ENCODE measurements at regions of chr2 and their contacts with region 1.

Region 1: GRCh38 chr2:234288974-234289455 is 207.9 kb downstream of the ARL4C start:
- DNase-seq: peak; percentile 78
- ATAC-seq: no peak
- H3K4me3 Mint-ChIP-seq: no peak overlapping the region
- H3K27ac Mint-ChIP-seq: peak overlapping the region; percentile 99
- H3K4me1 Mint-ChIP-seq: peaks cover 61% of the 10 kb centered on the region
- H3K27me3 Mint-ChIP-seq: no peaks in the 10 kb centered on the region
- CTCF ChIP-seq: peak; percentile 92

Region 2: GRCh38 chr2:234060236-234060635 is 228.8 kb before region 1 on chr2:
- CTCF ChIA-PET with region 1: no interaction called
- POLR2A ChIA-PET with region 1: no interaction called
- intact Hi-C with region 1: no loop called
- DNase-seq: no peak
- ATAC-seq: no peak
- H3K4me3 Mint-ChIP-seq: no peak overlapping the region
- H3K27ac Mint-ChIP-seq: no peak overlapping the region
- H3K4me1 Mint-ChIP-seq: peaks cover 6% of the 10 kb centered on the region
- H3K27me3 Mint-ChIP-seq: no peaks in the 10 kb centered on the region
- CTCF ChIP-seq: no peak

Region 3: GRCh38 chr2:234135720-234136221 is 153.2 kb before region 1 on chr2:
- CTCF ChIA-PET with region 1: interaction called, 25 read pairs
- POLR2A ChIA-PET with region 1: no interaction called
- intact Hi-C with region 1: loop called (anchors 5 kb)
- DNase-seq: peak; percentile 66
- ATAC-seq: peak; percentile 83
- H3K4me3 Mint-ChIP-seq: no peak overlapping the region
- H3K27ac Mint-ChIP-seq: no peak overlapping the region
- H3K4me1 Mint-ChIP-seq: peaks cover 17% of the 10 kb centered on the region
- H3K27me3 Mint-ChIP-seq: no peaks in the 10 kb centered on the region
- CTCF ChIP-seq: peak; percentile 90

Region 4: GRCh38 chr2:234147335-234147861 is 141.6 kb before region 1 on chr2:
- CTCF ChIA-PET with region 1: no interaction called
- POLR2A ChIA-PET with region 1: no interaction called
- intact Hi-C with region 1: no loop called
- DNase-seq: no peak
- ATAC-seq: peak; percentile 51
- H3K4me3 Mint-ChIP-seq: no peak overlapping the region
- H3K27ac Mint-ChIP-seq: no peak overlapping the region
- H3K4me1 Mint-ChIP-seq: peaks cover 25% of the 10 kb centered on the region
- H3K27me3 Mint-ChIP-seq: no peaks in the 10 kb centered on the region
- CTCF ChIP-seq: no peak

Region 5: DNA sequence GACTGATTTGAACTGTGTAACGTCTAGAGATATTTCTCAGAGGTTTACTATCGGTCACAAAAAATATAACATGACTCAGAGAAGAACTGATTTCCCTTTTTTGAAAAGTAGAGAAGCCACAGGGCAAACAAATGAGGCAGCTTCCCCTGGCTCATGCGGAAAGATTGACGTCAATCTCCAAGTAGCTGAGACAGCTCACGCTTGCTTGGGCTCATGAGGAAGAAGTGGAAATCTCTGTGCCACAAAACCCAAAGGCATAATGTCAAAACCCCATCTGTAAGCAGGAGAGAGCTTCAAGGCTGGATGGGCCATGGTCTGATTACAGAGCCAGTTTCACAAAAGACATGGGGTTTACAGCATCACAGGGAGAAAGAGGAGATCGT is 19.8 kb after region 1 on chr2:
- CTCF ChIA-PET with region 1: interaction called, 6 read pairs
- POLR2A ChIA-PET with region 1: interaction called, 14 read pairs
- intact Hi-C with region 1: loop called (anchors 2 kb)
- DNase-seq: peak; percentile 89
- ATAC-seq: peak; percentile 88
- H3K4me3 Mint-ChIP-seq: peak overlapping the region; percentile 40
- H3K27ac Mint-ChIP-seq: peak overlapping the region; percentile 96
- H3K4me1 Mint-ChIP-seq: peaks cover 53% of the 10 kb centered on the region
- H3K27me3 Mint-ChIP-seq: no peaks in the 10 kb centered on the region
- CTCF ChIP-seq: no peak

Region 6: DNA sequence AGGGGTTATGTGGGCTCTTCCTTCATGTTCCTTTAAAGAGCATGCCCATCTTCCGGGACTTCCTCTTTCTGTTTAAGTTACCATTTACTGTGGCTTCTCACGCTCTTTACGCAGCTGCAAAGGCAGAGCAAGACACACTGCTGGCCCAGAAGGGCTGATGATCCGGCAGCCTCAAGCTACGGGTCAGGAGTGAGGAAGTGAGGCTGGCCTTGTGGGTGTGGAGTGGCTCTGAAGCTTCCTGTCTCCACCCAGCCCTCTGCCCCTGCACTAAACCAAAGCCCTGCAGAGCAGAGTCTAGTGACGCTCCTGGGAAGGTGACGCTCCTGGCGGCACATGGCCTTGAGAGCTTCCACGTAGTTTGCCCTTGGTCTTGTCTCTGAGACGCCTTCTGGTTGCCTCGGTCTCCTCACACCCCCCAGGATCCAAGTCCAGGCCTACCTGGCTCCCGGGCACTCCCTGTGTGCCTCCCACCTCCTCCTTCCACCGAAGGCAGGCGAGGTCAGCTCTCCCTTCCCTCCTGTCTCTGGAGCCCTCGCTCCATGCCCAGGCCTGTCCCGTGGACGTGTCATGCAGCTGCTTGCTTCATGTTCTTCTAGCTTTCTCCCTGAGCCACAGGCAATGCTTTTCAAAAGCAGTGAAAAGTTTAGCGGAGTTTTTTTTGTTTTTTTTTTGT is 157.5 kb after region 1 on chr2:
- CTCF ChIA-PET with region 1: interaction called, 4 read pairs
- POLR2A ChIA-PET with region 1: interaction called, 12 read pairs
- intact Hi-C with region 1: no loop called
- DNase-seq: peak; percentile 90
- ATAC-seq: peak; percentile 94
- H3K4me3 Mint-ChIP-seq: peak overlapping the region; percentile 55
- H3K27ac Mint-ChIP-seq: peak overlapping the region; percentile 94
- H3K4me1 Mint-ChIP-seq: peaks cover 71% of the 10 kb centered on the region
- H3K27me3 Mint-ChIP-seq: no peaks in the 10 kb centered on the region
- CTCF ChIP-seq: no peak

Region 7: DNA sequence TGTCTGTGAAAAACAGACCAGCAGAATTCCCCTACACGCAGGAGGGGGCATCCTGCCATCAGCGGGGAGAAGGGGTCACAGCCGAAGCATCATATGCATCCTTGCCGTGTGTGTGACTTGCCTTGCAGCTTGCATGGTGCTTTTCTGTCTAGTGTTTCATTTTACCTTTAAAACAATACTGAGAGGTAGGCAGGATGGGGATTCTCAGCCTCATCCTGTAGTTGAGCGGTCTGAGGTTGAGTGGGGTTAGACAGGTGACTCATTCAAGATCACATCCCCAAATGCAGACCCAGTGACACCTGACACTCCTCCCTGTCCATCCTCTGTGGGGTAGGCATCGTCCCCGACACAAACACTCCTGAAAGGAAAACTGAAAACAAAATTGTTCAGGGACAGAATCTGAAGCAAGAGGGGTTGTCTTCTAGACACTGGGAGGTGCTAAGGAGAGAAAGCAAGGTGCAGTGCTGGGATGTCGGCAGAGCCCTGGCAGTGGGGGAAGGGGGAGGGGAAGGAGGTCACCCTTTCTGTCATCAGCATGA is 200.0 kb after region 1 on chr2:
- CTCF ChIA-PET with region 1: interaction called, 9 read pairs
- POLR2A ChIA-PET with region 1: interaction called, 10 read pairs
- intact Hi-C with region 1: loop called (anchors 2 kb)
- DNase-seq: peak; percentile 87
- ATAC-seq: peak; percentile 74
- H3K4me3 Mint-ChIP-seq: peak overlapping the region; percentile 68
- H3K27ac Mint-ChIP-seq: peak overlapping the region; percentile 96
- H3K4me1 Mint-ChIP-seq: peaks cover 80% of the 10 kb centered on the region
- H3K27me3 Mint-ChIP-seq: no peaks in the 10 kb centered on the region
- CTCF ChIP-seq: no peak